ENCODE measurements at regions of chr1 and their contacts with region 1.

Region 1: DNA sequence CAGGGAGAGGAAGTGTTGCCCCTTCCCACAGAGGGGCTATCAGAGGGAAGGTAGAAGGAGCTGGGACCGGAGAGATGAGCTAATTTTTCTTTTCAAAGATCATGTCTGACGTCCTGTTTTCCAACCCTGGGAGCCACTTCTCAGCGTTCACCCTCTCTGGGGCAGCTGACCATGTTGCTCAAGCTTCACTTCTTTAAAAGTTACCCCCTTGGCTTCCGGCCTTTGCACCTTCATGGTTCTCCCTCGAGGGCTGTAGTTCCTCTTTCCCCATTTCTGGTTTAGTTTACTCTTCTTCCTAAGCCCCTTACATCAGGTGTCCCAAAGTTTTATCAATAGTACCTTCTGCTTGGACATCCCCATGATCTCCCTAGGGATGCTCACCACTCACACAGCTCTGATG is 23.8 kb upstream of the CSF1 start:
- DNase-seq: peak; percentile 54

Region 2: GRCh38 chr1:109249654-109250465 is 637.0 kb before region 1 on chr1:
- intact Hi-C with region 1: loop called in 1 of 2 experiments (anchors 5 kb)
- DNase-seq: peak; percentile 81

Region 3: DNA sequence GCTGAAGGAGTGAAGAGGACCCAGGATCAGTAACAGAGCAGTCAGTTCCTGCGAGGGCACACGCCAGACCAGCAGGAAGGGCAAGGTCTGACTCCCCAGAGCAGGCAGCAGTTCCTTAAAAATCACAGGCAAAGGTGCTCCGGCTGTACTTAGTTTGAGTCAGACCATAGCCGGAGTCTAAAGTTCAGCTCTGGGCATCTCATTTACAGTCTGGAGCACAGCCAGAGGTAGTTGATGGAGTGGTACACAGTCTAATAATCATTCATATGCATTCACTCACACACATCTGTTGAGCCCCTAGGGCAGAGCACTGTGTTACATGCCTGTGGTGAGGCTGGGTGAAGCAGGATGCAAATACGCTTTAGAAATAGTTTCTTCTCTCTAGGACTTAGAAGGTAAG is 370.0 kb before region 1 on chr1:
- intact Hi-C with region 1: no loop called
- DNase-seq: no peak

Measured in posterior vena cava (tissue), 2 donors.